Cardiac septum (tissue), 1 donor: ENCODE measurements at regions of chr2 and their contacts with region 1.

Region 1: DNA sequence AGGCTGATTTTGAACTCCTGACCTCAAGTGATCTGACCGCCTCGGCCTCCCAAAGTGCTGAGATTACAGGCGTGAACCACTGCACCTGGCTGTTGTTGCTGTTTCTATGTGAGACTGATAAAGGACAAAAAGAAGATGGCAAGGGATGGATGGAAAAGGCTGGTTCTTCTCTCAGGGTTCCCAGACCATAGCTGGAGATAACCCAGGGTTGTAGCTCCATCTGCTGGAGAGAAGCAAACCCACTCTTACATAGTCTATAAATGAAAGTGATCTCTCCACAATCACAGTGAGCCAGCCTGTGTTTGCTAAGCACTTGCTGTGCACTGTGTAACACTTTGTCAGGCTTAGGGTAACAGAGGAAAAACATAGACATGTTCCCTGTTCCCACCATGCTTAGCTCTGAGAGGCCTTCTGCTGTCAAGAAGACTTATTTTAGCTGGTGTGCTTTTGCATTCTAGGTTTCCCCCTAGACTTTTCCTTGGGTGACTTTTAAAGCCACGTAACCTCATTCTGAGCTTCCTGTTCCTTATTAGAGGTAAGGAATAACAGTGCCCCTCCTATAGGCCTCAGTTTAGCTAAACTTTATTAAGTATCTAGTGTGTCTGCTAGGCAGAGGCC is 49.7 kb downstream of the LIMS1 start:
- DNase-seq: no peak

Region 2: DNA sequence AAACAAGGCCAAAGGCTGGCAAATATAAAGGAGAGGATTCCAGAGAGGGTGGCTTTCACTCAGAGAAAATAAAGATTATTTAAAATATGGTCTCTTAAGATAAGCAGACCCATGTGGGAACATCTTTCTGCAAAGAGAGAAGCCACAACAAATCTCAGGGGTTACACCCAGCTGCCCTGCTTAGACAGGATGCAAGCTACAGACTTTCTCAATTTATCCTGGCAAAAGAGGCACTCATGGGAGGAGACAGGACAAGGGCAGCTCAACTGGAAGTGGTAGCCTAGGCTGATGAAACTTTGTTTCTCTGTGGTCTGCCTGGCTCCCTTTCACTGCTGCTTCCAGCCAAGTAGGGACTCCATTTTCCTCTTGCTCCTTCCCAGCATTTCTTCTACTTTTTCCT is 232.1 kb before region 1 on chr2:
- intact Hi-C with region 1: loop called (anchors 2 kb)
- DNase-seq: no peak

Region 3: GRCh38 chr2:108637304-108637669 is 53.3 kb after region 1 on chr2:
- intact Hi-C with region 1: loop called (anchors 5 kb)
- DNase-seq: no peak